Common myeloid progenitor, CD34-positive (primary cell): ENCODE measurements at regions of chr5 and their contacts with region 1.

Region 1: GRCh38 chr5:62354028-62354874 is 48.2 kb downstream of the KIF2A start:
- DNase-seq: peak; percentile 62 to 80 (median 77)
- H3K4me3 ChIP-seq: no peak overlapping the region
- H3K27ac ChIP-seq: peak overlapping the region in 1 of 2 experiments; percentile 3
- H3K4me1 ChIP-seq: peaks cover 0 to 16% (median 5%) of the 10 kb centered on the region in 4 experiments
- H3K27me3 ChIP-seq: no peaks in the 10 kb centered on the region

Region 2: GRCh38 chr5:62343428-62343827 is 10.8 kb before region 1 on chr5:
- CTCF ChIA-PET with region 1: interaction called, 12 read pairs
- POLR2A ChIA-PET with region 1: no interaction called
- DNase-seq: no peak
- H3K4me3 ChIP-seq: no peak overlapping the region
- H3K27ac ChIP-seq: peak overlapping the region in 1 of 2 experiments; percentile 1
- H3K4me1 ChIP-seq: peaks cover 8 to 17% (median 13%) of the 10 kb centered on the region in 4 experiments
- H3K27me3 ChIP-seq: no peaks in the 10 kb centered on the region

Region 3: GRCh38 chr5:62486672-62487071 is 132.4 kb after region 1 on chr5:
- CTCF ChIA-PET with region 1: no interaction called
- POLR2A ChIA-PET with region 1: no interaction called
- DNase-seq: peak in 1 of 3 donors; percentile 21
- H3K4me3 ChIP-seq: no peak overlapping the region
- H3K27ac ChIP-seq: no peak overlapping the region
- H3K4me1 ChIP-seq: no peaks in the 10 kb centered on the region
- H3K27me3 ChIP-seq: no peaks in the 10 kb centered on the region